GM12878 (cell line): ENCODE measurements at regions of chr3 and their contacts with region 1.

Region 1: DNA sequence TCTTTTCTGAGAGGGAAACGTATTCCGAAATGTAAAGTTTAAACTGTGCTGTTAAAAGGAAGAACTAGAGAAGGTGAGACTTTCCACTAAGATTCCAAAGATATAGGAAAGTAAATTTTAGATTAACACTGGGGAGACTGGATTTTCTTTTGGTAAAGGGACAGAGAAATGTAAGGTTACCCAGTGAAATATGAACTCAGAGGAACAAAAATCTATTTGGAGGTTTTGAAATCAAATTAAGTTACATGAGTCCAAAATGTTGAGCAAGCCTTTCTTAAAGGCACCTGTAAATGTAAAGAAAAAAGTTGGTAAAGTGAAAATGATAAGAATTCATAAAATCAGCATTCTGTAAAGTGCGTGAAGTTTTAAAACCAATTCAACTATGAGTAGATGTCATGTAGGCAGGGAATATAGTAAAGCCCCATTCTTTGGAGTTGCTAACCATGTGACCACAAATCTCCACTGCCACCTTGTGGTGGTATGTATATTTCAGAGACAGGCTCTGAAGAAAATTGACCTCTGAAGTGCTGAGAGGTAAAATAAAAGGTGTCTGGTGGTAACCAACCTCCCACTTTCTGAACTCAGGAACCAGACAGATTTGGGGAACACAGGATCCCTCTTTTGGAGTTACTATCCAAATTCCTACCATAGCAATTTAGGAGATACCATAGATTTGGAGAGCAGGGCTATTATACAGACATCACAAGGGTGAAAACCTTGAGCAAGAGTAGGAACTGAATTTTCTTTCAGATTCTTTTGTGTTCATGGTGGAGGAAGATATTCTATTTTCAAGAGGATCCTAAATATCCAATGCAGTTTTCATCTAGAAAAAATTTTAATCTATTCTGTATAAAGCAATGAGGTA is 215.3 kb downstream of the ROBO2 start:
- DNase-seq: no peak
- ATAC-seq: peak; percentile 90
- H3K4me3 ChIP-seq: no peak overlapping the region
- H3K27ac ChIP-seq: no peak overlapping the region
- H3K4me1 ChIP-seq: no peaks in the 10 kb centered on the region
- H3K27me3 ChIP-seq: no peaks in the 10 kb centered on the region
- CTCF ChIP-seq: peak; percentile 47 to 71 (median 59)
- EP300 ChIP-seq: no peak
- POLR2A ChIP-seq: no peak
- RAD21 ChIP-seq: peak; percentile 60

Region 2: DNA sequence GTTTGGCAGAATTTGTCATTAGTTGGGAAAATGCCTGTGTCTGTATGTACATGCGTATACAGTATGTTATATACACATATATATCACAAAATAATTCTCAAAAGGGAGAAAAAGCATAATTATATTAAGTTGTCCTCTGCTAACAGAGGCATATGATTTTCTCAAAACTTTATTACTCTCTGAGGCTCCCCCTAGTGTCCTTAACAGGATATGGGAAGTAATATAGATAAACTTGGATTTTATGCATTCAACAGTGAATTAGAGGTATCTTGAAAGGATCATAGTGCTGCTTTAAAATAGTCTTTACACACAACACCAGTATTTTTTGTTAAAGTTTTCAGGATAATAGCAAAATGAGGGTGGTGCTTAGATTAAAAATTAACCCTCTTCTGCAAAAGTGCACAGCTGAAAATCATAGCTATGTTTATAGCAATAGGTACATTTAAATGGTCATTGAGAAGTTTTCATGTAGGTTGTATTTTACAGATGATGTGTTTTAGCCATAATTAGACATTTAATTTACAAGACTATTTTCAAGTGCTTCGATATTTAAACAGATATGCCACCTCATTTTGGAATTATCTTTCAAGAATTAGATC is 669.3 kb before region 1 on chr3:
- CTCF ChIA-PET with region 1: no interaction called
- POLR2A ChIA-PET with region 1: no interaction called
- RAD21 ChIA-PET with region 1: no interaction called
- SMC1A ChIA-PET with region 1: no interaction called
- in situ Hi-C with region 1: no loop called
- intact Hi-C with region 1: loop called (anchors 10 kb)
- DNase-seq: no peak
- ATAC-seq: peak; percentile 59
- H3K4me3 ChIP-seq: no peak overlapping the region
- H3K27ac ChIP-seq: no peak overlapping the region
- H3K4me1 ChIP-seq: no peaks in the 10 kb centered on the region
- H3K27me3 ChIP-seq: no peaks in the 10 kb centered on the region
- CTCF ChIP-seq: peak; percentile 39 to 41 (median 40); a peak in 3 of 6 replicates
- EP300 ChIP-seq: no peak
- POLR2A ChIP-seq: no peak
- RAD21 ChIP-seq: peak; percentile 51

Region 3: DNA sequence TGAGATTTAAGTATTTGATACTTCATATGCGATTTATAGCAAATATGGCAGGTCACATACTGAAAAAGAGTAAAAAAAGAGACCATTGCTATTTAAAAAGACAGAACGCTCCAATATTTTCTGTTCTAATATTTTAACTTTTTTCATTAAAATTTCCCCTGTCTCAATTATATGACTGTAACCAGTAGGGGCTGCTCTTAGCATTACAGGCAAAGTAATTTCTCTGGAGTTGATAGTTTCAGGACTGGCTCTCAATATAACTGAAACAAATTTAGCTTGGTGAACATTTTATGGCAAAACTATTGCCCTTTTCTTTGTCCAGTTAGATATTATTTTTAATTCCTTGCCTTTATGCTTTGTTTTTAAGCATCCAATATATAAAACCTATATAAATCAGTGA is 501.6 kb before region 1 on chr3:
- CTCF ChIA-PET with region 1: interaction called, 4 read pairs
- POLR2A ChIA-PET with region 1: no interaction called
- RAD21 ChIA-PET with region 1: no interaction called
- SMC1A ChIA-PET with region 1: no interaction called
- in situ Hi-C with region 1: no loop called
- intact Hi-C with region 1: loop called (anchors 5 kb)
- DNase-seq: no peak
- ATAC-seq: no peak
- H3K4me3 ChIP-seq: no peak overlapping the region
- H3K27ac ChIP-seq: no peak overlapping the region
- H3K4me1 ChIP-seq: no peaks in the 10 kb centered on the region
- H3K27me3 ChIP-seq: no peaks in the 10 kb centered on the region
- CTCF ChIP-seq: no peak; a peak in 1 of 6 replicates
- EP300 ChIP-seq: no peak
- POLR2A ChIP-seq: no peak
- RAD21 ChIP-seq: no peak; the same call in 1 of the 2 replicates

Region 4: DNA sequence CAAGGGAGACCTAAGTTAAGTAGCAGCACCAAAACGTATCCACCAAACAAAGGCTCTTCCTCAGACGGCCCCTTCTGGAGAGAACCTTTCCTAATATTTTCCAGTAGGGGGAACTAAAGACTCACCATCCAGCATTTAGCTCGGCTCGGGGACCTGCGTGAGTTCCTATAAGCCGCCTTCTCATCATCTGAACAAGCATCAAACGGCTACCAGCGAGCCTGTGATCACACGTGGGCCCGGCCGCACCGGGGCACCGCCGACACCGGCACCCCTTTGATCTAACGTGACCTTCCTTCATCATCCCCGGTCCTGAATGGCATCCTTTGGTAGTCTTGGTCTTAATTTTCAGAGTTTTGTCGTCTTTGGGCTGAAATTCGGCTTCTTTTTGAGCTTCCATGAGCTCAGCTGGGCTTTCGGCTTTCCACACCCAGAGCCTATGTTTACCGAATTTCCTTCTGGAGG is 216.7 kb before region 1 on chr3:
- CTCF ChIA-PET with region 1: interaction called, 6 read pairs
- POLR2A ChIA-PET with region 1: no interaction called
- RAD21 ChIA-PET with region 1: interaction called, 5 read pairs
- SMC1A ChIA-PET with region 1: no interaction called
- in situ Hi-C with region 1: loop called (anchors 10 kb)
- intact Hi-C with region 1: loop called (anchors 1 kb)
- DNase-seq: no peak
- ATAC-seq: peak; percentile 94
- H3K4me3 ChIP-seq: no peak overlapping the region
- H3K27ac ChIP-seq: no peak overlapping the region
- H3K4me1 ChIP-seq: no peaks in the 10 kb centered on the region
- H3K27me3 ChIP-seq: no peaks in the 10 kb centered on the region; a peak in 1 of 4 replicates
- CTCF ChIP-seq: peak; percentile 15 to 59 (median 33); a peak in 4 of 6 replicates
- EP300 ChIP-seq: no peak
- POLR2A ChIP-seq: no peak
- RAD21 ChIP-seq: peak; percentile 62

Region 5: GRCh38 chr3:77370413-77370812 is 115.2 kb after region 1 on chr3:
- CTCF ChIA-PET with region 1: no interaction called
- POLR2A ChIA-PET with region 1: no interaction called
- RAD21 ChIA-PET with region 1: no interaction called
- SMC1A ChIA-PET with region 1: no interaction called
- in situ Hi-C with region 1: no loop called
- intact Hi-C with region 1: no loop called
- DNase-seq: no peak
- ATAC-seq: no peak
- H3K4me3 ChIP-seq: no peak overlapping the region
- H3K27ac ChIP-seq: no peak overlapping the region
- H3K4me1 ChIP-seq: no peaks in the 10 kb centered on the region
- H3K27me3 ChIP-seq: no peaks in the 10 kb centered on the region
- CTCF ChIP-seq: no peak
- EP300 ChIP-seq: no peak
- POLR2A ChIP-seq: no peak
- RAD21 ChIP-seq: no peak